ENCODE measurements at regions of chr9 and their contacts with region 1.

Region 1: GRCh38 chr9:126228781-126229444 is 97.7 kb upstream of the MVB12B start:
- DNase-seq: peak; percentile 59 to 92
- H3K4me3 ChIP-seq: no peak overlapping the region
- CTCF ChIP-seq: peak in 1 of 3 donors; percentile 81
- POLR2A ChIP-seq: no peak

Region 2: GRCh38 chr9:125407974-125408900 is 820.7 kb before region 1 on chr9:
- intact Hi-C with region 1: loop called (anchors 5 kb)
- DNase-seq: peak; percentile 50 to 95
- H3K4me3 ChIP-seq: peak overlapping the region; percentile 42
- CTCF ChIP-seq: peak in 1 of 3 donors; percentile 79
- POLR2A ChIP-seq: no peak

Region 3: DNA sequence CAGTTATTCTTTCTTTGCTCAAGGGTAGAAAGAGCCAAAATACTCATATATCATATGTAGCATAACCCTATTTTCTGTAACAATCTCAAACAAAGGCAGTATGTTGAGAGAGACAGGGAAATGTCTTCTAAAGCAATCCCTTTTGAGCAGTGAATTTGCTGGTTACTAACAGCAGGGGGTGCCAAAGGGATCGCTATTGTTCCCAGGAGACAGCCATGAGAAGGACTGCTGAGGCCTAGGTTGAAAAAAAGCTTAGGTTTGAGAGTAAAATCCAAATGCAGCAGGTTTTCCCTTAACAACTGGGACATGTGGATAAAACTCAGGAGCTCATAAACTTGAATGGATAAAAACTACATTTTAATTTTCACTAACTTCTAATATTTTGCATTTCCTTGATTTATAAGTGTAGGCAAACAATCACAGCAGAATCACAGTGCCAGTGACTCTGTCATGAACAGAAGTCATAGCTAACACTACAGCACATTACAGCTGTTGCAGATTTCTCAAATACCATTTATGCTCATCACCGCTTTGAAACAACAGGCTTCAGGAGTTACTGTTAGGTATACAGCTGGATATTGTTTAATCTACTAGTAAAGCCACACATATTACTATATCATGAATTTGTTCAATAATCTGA is 670.3 kb before region 1 on chr9:
- intact Hi-C with region 1: loop called (anchors 10 kb)
- DNase-seq: peak in 1 of 2 donors; percentile 51
- H3K4me3 ChIP-seq: no peak overlapping the region
- CTCF ChIP-seq: no peak
- POLR2A ChIP-seq: no peak

Measured in lower leg skin (tissue), 4 donors.